Activated CD4-positive, alpha-beta T cell treated with anti-CD3 and anti-CD28 coated beads, Interleukin-2, amount 10 ng/mL, durations not matched to agents 24 days and 14 days (primary cell): ENCODE measurements at regions of chr1 and their contacts with region 1.

Region 1: DNA sequence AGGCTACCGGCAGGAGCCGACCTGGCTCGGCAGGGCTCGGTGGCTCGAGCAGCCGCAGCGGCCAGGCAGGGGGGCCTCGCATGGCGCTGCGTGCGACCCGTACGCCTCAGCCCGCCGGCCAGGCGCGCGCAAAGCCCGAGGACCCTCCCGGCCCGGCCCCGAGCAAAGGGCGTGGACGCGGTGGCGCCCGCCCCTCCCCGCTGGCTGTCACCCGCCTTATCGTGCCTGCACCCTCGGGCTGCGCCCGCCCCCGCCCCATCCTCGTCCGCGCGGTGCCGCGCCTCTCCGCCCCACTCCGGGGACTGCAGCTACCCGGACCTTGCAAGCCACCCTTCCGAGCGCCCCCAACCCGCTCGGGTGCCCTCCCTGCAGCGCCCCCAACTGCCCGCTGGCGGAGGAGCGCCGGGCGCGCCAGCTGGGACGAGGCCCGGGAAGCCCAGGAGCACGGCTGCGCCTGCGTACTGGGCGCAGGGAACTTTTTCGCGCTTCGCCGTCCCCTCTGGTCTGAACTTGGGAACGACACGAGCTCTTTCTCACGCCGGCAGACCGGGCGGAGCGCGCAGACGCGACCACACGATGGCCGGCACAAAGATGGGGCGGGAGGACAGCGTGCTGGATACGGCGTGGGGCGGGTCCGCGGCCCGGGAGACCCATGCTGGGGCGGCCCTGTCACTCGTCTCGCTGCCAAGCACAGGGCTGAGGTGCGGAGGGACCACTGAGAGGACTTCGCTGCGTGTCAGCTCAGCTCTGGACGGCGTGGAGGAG is at the start of gene ABCB10:
- DNase-seq: peak; percentile 96
- H3K4me3 Mint-ChIP-seq: peak within 1 kb of the TSS; percentile 90
- H3K27ac Mint-ChIP-seq: peak within 1 kb of the TSS; percentile 92
- H3K4me1 Mint-ChIP-seq: peaks cover 24% of the 10 kb centered on the region
- H3K27me3 Mint-ChIP-seq: no peaks in the 10 kb centered on the region
- total RNA-seq, gene ABCB10: 46.5 and 49.7 TPM in 2 replicates

Region 2: GRCh38 chr1:229092377-229093237 is 466.1 kb before region 1 on chr1:
- intact Hi-C with region 1: no loop called
- DNase-seq: no peak
- H3K4me3 Mint-ChIP-seq: no peak overlapping the region
- H3K27ac Mint-ChIP-seq: no peak overlapping the region
- H3K4me1 Mint-ChIP-seq: peaks cover 6% of the 10 kb centered on the region
- H3K27me3 Mint-ChIP-seq: peaks cover 8% of the 10 kb centered on the region

Region 3: DNA sequence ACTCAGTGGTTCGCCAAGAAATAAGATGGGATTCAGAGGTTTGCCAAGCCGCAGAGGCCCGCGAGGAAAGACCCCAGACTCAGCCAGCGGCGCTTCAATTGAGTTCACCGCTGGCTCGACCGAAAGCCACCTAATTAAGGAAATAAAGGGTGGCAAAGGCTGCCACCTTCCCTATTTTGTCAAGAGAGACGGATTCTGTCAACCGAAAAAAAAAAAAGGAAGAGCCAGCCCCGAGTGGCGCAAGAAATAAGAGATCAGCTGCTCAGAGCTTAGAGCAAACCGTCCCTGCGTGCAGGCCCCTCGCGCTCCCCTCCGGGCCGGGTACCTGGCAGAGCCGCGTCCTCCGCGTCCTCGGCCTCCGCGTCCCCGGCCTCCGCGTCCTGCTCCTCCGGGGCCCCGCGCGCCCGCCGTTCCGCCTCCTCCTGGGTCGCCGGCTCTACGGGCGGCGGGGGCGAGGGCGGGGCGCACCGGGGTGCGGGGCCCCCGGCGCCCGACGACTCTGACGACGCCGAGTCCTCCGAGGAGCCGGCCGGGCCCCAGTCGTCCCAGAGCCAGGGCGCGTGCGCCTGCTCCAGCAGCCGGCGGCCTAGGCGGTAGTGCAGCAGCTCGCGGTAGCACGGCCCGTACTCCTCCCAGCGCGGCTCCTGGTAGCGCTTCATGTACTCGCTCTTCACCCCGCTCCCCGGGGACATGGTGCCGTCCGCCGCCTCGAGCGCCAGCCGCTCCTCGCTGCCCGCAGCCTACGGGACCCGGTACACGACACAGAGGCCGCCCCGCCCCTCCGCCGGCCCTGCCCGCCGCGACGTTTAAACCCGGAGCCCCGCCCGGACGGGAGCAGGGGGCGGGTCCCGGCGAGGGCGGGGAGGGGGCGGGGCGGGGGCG is 216.7 kb before region 1 on chr1:
- intact Hi-C with region 1: loop called (anchors 2 kb)
- DNase-seq: peak; percentile 96
- H3K4me3 Mint-ChIP-seq: peak overlapping the region; percentile 91
- H3K27ac Mint-ChIP-seq: peak overlapping the region; percentile 94
- H3K4me1 Mint-ChIP-seq: peaks cover 48% of the 10 kb centered on the region
- H3K27me3 Mint-ChIP-seq: peaks cover 20% of the 10 kb centered on the region

Region 4: GRCh38 chr1:229352975-229353374 is 205.8 kb before region 1 on chr1:
- intact Hi-C with region 1: no loop called
- DNase-seq: no peak
- H3K4me3 Mint-ChIP-seq: no peak overlapping the region
- H3K27ac Mint-ChIP-seq: no peak overlapping the region
- H3K4me1 Mint-ChIP-seq: peaks cover under 1% of the 10 kb centered on the region
- H3K27me3 Mint-ChIP-seq: peaks cover 60% of the 10 kb centered on the region

Region 5: GRCh38 chr1:229507951-229508822 is 50.6 kb before region 1 on chr1 and contains the start of gene NUP133:
- intact Hi-C with region 1: loop called (anchors 2 kb)
- DNase-seq: peak; percentile 99
- H3K4me3 Mint-ChIP-seq: peak within 1 kb of the TSS; percentile 92
- H3K27ac Mint-ChIP-seq: peak within 1 kb of the TSS; percentile 92
- H3K4me1 Mint-ChIP-seq: peaks cover 32% of the 10 kb centered on the region
- H3K27me3 Mint-ChIP-seq: peaks cover 2% of the 10 kb centered on the region
- total RNA-seq, gene NUP133: 52.3 and 52.9 TPM in 2 replicates

Region 6: GRCh38 chr1:229625915-229626831 is 67.4 kb after region 1 on chr1 and contains the starts of genes TAF5L and URB2:
- intact Hi-C with region 1: loop called (anchors 1 kb)
- DNase-seq: peak; percentile 97
- H3K4me3 Mint-ChIP-seq: peak within 1 kb of the TSS; percentile 99
- H3K27ac Mint-ChIP-seq: peak within 1 kb of the TSS; percentile 96
- H3K4me1 Mint-ChIP-seq: peaks cover 49% of the 10 kb centered on the region
- H3K27me3 Mint-ChIP-seq: no peaks in the 10 kb centered on the region
- total RNA-seq, gene TAF5L: 29.7 and 30.7 TPM in 2 replicates
- total RNA-seq, gene URB2: 35.8 and 37.1 TPM in 2 replicates